Esophagus muscularis mucosa (tissue), 4 donors: ENCODE measurements at regions of chr3 and their contacts with region 1.

Region 1: GRCh38 chr3:150495563-150496168 is 50.6 kb downstream of the SERP1 start:
- DNase-seq: no peak
- H3K4me3 ChIP-seq: no peak overlapping the region
- H3K27ac ChIP-seq: no peak overlapping the region
- H3K4me1 ChIP-seq: no peaks in the 10 kb centered on the region
- H3K27me3 ChIP-seq: no peaks in the 10 kb centered on the region
- CTCF ChIP-seq: peak; percentile 82 to 86 (median 84)
- EP300 ChIP-seq: no peak
- POLR2A ChIP-seq: no peak

Region 2: DNA sequence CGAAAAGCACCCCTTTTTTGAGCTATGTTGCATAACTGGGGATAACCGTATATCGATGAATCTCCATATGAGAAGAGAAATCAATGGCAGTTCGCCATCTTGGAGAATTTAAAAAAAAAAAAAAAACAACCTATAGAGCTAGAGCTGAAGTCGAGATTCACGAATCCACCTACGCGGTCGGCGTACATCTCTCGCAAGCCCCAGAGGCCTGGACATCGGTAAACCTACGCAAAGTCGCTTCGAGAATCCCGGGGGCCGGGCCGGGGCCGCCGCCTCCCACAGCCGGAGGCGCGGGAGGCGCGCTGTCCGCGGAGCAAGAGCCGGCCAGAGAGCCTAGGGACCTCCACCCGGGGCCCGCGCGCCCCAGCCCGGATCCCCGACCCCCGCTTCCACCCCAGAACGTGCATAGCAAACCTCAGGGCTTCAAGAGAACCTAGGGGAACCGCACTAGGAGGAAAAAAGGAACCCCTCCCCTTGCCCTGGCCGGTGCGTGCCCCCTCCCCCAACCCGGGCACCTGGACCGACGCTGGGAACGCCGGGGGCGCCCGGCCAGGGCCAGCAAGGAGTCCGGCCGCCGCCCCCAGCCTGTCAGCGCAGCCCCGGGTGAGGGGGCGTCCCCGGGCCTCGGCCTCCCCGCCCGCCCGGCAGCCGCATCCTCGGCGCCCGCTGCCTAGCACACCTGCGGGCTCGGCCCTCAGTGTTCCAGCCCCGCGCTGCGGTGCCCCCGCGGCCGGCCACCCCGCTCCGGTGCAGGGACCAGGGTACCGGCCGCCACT is 525.5 kb before region 1 on chr3:
- intact Hi-C with region 1: loop called (anchors 10 kb)
- DNase-seq: no peak
- H3K4me3 ChIP-seq: peak overlapping the region; percentile 93 to 98 (median 96)
- H3K27ac ChIP-seq: peak overlapping the region; percentile 95 to 98 (median 98)
- H3K4me1 ChIP-seq: peaks cover 14 to 44% (median 40%) of the 10 kb centered on the region in 4 donors
- H3K27me3 ChIP-seq: no peaks in the 10 kb centered on the region
- CTCF ChIP-seq: no peak
- EP300 ChIP-seq: no peak
- POLR2A ChIP-seq: peak; percentile 14

Region 3: DNA sequence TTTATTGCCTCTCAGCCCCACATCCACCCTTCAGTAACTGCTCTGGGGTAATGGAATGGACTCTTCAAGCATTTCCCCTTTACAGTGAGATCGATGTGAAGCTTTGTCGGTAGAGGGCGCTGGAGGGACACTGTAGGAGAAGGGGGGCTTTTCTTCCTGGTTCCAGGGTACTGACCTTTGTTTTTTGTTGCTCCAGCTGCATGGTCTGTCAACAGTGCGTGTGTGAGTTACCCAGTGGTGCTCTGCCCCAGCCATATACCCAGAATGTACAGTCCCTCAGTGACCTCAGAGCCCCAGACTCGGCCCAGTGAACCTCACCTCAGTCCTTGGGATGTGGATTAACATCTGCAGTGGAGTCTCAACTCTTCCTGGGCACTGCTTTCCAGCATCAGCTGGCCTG is 267.8 kb before region 1 on chr3:
- intact Hi-C with region 1: loop called (anchors 2 kb)
- DNase-seq: no peak
- H3K4me3 ChIP-seq: no peak overlapping the region
- H3K27ac ChIP-seq: no peak overlapping the region
- H3K4me1 ChIP-seq: peaks cover 2 to 25% (median 17%) of the 10 kb centered on the region in 4 donors
- H3K27me3 ChIP-seq: no peaks in the 10 kb centered on the region
- CTCF ChIP-seq: peak; percentile 44 to 50 (median 48)
- EP300 ChIP-seq: no peak
- POLR2A ChIP-seq: no peak

Region 4: DNA sequence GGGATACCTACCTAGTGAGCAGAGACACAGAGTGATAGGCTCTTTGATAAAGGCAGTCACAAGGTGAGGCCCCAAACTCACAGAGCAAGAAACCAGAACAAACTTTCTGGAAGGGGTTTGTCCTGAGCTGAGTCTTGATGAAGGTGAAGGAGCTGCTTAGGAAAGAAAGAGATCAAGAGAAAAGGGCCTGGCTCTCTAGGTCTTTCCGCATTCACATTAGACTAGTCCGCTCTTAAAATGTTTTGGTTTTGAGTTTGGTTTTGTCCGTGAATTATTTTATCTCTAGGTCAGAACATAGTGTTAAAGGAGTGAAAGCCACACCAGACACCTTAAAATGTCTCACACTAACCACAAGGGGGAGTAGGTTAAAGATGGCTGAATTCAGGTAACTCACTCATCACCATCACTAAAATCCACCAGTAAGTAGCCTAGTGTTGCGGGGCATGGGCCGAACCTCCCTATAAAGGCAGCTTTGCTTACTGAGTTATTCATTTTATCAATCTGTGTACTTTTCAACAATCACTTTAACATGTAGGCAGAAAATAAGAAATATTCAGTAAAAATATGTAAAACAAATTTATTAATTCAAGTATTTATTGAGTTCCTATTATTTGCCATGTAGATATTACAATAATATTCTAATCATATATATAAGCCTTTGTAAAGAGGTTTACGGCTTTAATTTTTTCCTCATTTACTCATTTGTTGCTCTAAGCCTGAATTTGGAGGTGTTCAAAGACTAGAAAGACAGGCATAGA is 209.1 kb before region 1 on chr3:
- intact Hi-C with region 1: loop called (anchors 5 kb)
- DNase-seq: no peak
- H3K4me3 ChIP-seq: no peak overlapping the region
- H3K27ac ChIP-seq: no peak overlapping the region
- H3K4me1 ChIP-seq: no peaks in the 10 kb centered on the region
- H3K27me3 ChIP-seq: no peaks in the 10 kb centered on the region
- CTCF ChIP-seq: peak; percentile 41 to 65 (median 58)
- EP300 ChIP-seq: no peak
- POLR2A ChIP-seq: no peak